ENCODE measurements at regions of chr6 and their contacts with region 1.

Region 1: GRCh38 chr6:17392978-17393891 is at the start of gene CAP2:
- DNase-seq: no peak
- H3K4me3 ChIP-seq: peak within 1 kb of the TSS; percentile 76 to 80
- H3K27ac ChIP-seq: peak within 1 kb of the TSS; percentile 89
- H3K4me1 ChIP-seq: no peaks in the 10 kb centered on the region
- H3K27me3 ChIP-seq: no peaks in the 10 kb centered on the region
- CTCF ChIP-seq: no peak
- POLR2A ChIP-seq: peak in 1 of 2 donors; percentile 8
- total RNA-seq, gene CAP2: 9.6 TPM

Region 2: GRCh38 chr6:17281100-17281494 is 112.1 kb before region 1 on chr6 and contains the start of gene RBM24:
- intact Hi-C with region 1: loop called (anchors 10 kb)
- DNase-seq: no peak
- H3K4me3 ChIP-seq: peak within 1 kb of the TSS; percentile 84 to 90
- H3K27ac ChIP-seq: peak within 1 kb of the TSS; percentile 90
- H3K4me1 ChIP-seq: peaks cover 6% of the 10 kb centered on the region
- H3K27me3 ChIP-seq: no peaks in the 10 kb centered on the region
- CTCF ChIP-seq: peak in 1 of 3 experiments; percentile 18
- POLR2A ChIP-seq: no peak
- total RNA-seq, gene RBM24: 2.7 TPM

Measured in vagina (tissue), 2 donors.